Naive thymus-derived CD4-positive, alpha-beta T cell (primary cell): ENCODE measurements at regions of chr7 and their contacts with region 1.

Region 1: DNA sequence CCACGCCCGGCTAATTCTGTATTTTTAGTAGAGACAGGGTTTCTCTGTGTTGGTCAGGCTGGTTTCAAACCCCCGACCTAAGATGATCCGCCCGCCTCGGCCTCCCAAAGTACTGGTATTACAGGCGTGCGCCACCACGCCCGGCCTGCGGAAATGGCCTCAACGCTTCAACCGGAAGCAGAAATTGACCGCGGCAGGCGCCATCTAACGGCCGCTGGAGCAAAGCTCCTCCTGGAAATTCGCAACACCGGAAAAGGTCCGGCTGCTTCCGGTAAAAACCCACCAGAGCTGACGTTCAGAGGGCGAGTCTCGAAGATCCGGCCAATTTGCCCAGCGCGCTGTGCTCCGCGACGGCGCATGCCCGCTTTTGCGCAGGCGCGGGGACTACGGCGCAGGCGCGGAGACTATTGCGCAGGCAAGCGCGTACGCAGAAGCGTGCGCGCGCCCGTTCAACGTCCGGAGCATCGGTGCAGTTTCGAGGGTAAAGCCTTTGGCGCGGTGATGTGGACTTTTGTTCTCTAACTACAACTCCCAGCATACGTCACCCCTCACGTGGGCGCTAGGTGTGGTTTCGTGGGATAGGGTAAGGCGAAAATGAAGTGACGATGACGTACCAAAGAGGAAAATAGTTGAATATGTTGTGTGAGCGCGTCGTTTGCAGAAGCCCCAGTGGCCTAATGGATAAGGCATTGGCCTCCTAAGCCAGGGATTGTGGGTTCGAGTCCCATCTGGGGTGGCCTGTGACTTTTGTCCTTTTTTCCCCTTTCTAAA is 915 bp upstream of the FMC1 start:
- DNase-seq: peak; percentile 93 to 100 (median 99)
- ATAC-seq: peak; percentile 89
- H3K4me3 ChIP-seq: peak overlapping the region; percentile 95
- H3K4me3 Mint-ChIP-seq: peak overlapping the region; percentile 93 to 100 (median 98)
- H3K27ac ChIP-seq: peak overlapping the region; percentile 100
- H3K27ac Mint-ChIP-seq: peak overlapping the region; percentile 98 to 100 (median 100)
- H3K4me1 ChIP-seq: peaks cover 11 to 13% of the 10 kb centered on the region in 2 donors
- H3K4me1 Mint-ChIP-seq: peaks cover 12 to 49% (median 38%) of the 10 kb centered on the region in 7 donors
- H3K27me3 ChIP-seq: no peaks in the 10 kb centered on the region
- H3K27me3 Mint-ChIP-seq: peaks cover 0 to 9% (median 5%) of the 10 kb centered on the region in 5 donors

Region 2: GRCh38 chr7:138002096-138002827 is 1338.0 kb before region 1 on chr7:
- CTCF ChIA-PET with region 1: no interaction called
- POLR2A ChIA-PET with region 1: no interaction called
- intact Hi-C with region 1: loop called in 1 of 2 experiments (anchors 2 kb)
- DNase-seq: peak; percentile 95 to 98 (median 97)
- ATAC-seq: peak; percentile 95
- H3K4me3 ChIP-seq: peak overlapping the region; percentile 99
- H3K4me3 Mint-ChIP-seq: peak overlapping the region; percentile 89 to 96 (median 94)
- H3K27ac ChIP-seq: peak overlapping the region; percentile 79
- H3K27ac Mint-ChIP-seq: peak overlapping the region; percentile 67 to 95 (median 89)
- H3K4me1 ChIP-seq: peaks cover 6 to 14% of the 10 kb centered on the region in 2 donors
- H3K4me1 Mint-ChIP-seq: peaks cover 9 to 54% (median 45%) of the 10 kb centered on the region in 7 donors
- H3K27me3 ChIP-seq: no peaks in the 10 kb centered on the region
- H3K27me3 Mint-ChIP-seq: no peaks in the 10 kb centered on the region

Region 3: DNA sequence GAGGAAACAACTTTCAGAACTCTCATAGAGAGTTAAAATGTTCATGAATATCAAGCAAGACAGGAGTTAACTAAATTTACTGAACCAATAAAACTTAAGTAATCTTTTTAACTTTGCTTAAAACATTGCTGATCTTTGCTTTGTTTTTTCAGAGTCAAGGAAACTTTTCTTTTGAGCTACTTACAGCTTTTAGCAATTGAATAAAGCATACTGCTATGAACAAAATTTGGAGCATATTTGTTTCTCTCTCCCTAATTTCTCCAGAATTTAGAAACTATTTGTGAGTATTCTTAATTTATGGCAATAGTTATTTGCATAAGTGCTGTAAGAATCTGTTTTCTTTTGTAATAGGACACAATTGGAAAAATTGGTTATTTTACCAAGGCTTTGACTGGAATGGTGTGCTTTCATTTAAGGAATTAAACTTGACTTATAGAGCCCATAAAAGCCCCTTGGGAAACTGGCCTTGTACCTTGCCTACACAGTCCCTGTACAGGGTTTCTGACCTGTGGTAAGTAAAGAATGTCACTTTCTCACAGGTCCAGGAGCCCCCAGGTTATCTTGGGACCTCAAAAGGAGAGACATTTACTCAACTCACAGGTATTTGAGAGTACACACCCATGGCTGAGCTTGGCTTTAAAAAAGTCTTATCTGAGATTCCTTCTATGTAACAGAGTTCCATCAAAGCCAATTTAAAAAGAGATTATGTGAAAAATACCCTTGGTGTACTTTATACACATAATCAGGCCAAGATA is 335.7 kb before region 1 on chr7:
- CTCF ChIA-PET with region 1: no interaction called
- POLR2A ChIA-PET with region 1: no interaction called
- intact Hi-C with region 1: no loop called
- DNase-seq: peak in 2 of 9 donors; percentile 17 to 18
- ATAC-seq: no peak
- H3K4me3 ChIP-seq: no peak overlapping the region
- H3K4me3 Mint-ChIP-seq: no peak overlapping the region
- H3K27ac ChIP-seq: no peak overlapping the region
- H3K27ac Mint-ChIP-seq: no peak overlapping the region
- H3K4me1 ChIP-seq: peaks cover 0 to under 1% of the 10 kb centered on the region in 2 donors
- H3K4me1 Mint-ChIP-seq: peaks cover 0 to 8% (median 5%) of the 10 kb centered on the region in 7 donors
- H3K27me3 ChIP-seq: no peaks in the 10 kb centered on the region
- H3K27me3 Mint-ChIP-seq: peaks cover 0 to 21% (median 0%) of the 10 kb centered on the region in 5 donors

Region 4: GRCh38 chr7:139043823-139044812 is 296.1 kb before region 1 on chr7:
- CTCF ChIA-PET with region 1: no interaction called
- POLR2A ChIA-PET with region 1: no interaction called
- intact Hi-C with region 1: loop called in 1 of 2 experiments (anchors 5 kb)
- DNase-seq: peak in 5 of 9 donors; percentile 36 to 71 (median 40)
- ATAC-seq: peak; percentile 81
- H3K4me3 ChIP-seq: no peak overlapping the region
- H3K4me3 Mint-ChIP-seq: peak overlapping the region in 9 of 10 donors; percentile 4 to 87 (median 58)
- H3K27ac ChIP-seq: peak overlapping the region; percentile 50
- H3K27ac Mint-ChIP-seq: peak overlapping the region; percentile 48 to 89 (median 79)
- H3K4me1 ChIP-seq: peaks cover 36 to 38% of the 10 kb centered on the region in 2 donors
- H3K4me1 Mint-ChIP-seq: peaks cover 35 to 77% (median 67%) of the 10 kb centered on the region in 7 donors
- H3K27me3 ChIP-seq: no peaks in the 10 kb centered on the region
- H3K27me3 Mint-ChIP-seq: no peaks in the 10 kb centered on the region

Region 5: DNA sequence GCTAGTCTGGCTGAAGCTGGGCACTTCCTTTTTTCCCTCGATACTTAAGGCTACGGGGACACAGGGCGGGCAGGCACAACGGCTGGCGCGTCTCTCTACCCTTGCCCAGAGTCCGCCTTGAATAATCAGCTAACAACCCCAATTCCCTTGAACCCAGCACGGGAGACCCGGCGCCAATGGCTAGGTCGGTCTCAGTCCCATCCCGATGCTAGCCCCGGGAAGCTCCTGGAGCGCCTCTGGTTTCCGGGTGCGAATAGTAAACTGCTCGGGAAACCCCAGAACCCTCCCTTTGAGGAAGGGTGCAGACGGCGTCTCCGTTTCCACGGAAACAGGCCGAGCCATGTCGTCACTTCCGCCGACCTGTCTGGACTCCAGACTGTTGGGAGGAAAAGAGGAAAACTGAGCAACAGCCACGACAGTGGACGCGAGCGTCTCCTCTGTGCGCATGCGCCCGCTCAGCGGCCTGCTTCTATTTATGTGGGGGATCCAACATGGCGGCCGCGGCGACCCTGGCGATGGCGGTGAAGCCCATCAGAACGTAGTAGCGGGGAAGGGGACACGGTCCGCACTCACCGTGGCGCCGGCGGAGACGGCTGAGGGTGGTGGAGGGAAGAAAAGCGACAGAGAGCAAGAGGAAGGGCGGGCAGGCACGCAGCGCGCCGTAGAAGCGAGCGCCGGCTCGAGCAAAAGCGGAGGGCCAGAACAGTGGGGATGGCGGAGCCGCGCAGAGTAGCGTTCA is 109.3 kb before region 1 on chr7 and contains the start of gene UBN2:
- CTCF ChIA-PET with region 1: no interaction called
- POLR2A ChIA-PET with region 1: no interaction called
- intact Hi-C with region 1: loop called (anchors 1 kb)
- DNase-seq: peak; percentile 68 to 91 (median 76)
- ATAC-seq: peak; percentile 86
- H3K4me3 ChIP-seq: peak within 1 kb of the TSS; percentile 77
- H3K4me3 Mint-ChIP-seq: peak within 1 kb of the TSS; percentile 96 to 100 (median 99)
- H3K27ac ChIP-seq: peak within 1 kb of the TSS; percentile 85
- H3K27ac Mint-ChIP-seq: peak within 1 kb of the TSS; percentile 93 to 98 (median 96)
- H3K4me1 ChIP-seq: no peaks in the 10 kb centered on the region
- H3K4me1 Mint-ChIP-seq: peaks cover 24 to 33% (median 29%) of the 10 kb centered on the region in 7 donors
- H3K27me3 ChIP-seq: no peaks in the 10 kb centered on the region
- H3K27me3 Mint-ChIP-seq: peaks cover 0 to 36% (median 5%) of the 10 kb centered on the region in 5 donors
- total RNA-seq, gene UBN2: 16.2 to 31.2 (median 20.5) TPM

Region 6: DNA sequence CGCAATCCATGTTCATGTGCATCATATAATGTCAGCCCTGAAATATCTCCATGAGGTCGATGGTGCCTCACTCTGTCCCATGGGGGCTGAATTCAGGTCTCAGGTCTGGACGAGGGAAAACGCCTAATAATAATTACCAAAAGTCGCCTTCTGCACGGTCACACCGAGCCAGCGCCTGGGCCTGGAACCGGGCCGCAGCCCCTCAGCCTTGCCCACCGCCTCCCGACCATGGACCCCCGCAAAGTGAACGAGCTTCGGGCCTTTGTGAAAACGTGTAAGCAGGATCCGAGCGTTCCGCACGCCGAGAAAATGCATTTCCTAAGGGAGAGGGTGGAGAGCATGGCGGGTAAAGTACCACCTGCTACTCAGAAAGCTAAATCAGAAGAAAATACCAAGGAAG is 162.0 kb after region 1 on chr7:
- CTCF ChIA-PET with region 1: no interaction called
- POLR2A ChIA-PET with region 1: no interaction called
- intact Hi-C with region 1: loop called in 1 of 2 experiments (anchors 2 kb)
- DNase-seq: no peak
- ATAC-seq: no peak
- H3K4me3 ChIP-seq: no peak overlapping the region
- H3K4me3 Mint-ChIP-seq: no peak overlapping the region
- H3K27ac ChIP-seq: no peak overlapping the region
- H3K27ac Mint-ChIP-seq: no peak overlapping the region
- H3K4me1 ChIP-seq: no peaks in the 10 kb centered on the region
- H3K4me1 Mint-ChIP-seq: peaks cover 2 to 9% (median 5%) of the 10 kb centered on the region in 7 donors
- H3K27me3 ChIP-seq: no peaks in the 10 kb centered on the region
- H3K27me3 Mint-ChIP-seq: peaks cover 0 to 19% (median 5%) of the 10 kb centered on the region in 5 donors

Region 7: DNA sequence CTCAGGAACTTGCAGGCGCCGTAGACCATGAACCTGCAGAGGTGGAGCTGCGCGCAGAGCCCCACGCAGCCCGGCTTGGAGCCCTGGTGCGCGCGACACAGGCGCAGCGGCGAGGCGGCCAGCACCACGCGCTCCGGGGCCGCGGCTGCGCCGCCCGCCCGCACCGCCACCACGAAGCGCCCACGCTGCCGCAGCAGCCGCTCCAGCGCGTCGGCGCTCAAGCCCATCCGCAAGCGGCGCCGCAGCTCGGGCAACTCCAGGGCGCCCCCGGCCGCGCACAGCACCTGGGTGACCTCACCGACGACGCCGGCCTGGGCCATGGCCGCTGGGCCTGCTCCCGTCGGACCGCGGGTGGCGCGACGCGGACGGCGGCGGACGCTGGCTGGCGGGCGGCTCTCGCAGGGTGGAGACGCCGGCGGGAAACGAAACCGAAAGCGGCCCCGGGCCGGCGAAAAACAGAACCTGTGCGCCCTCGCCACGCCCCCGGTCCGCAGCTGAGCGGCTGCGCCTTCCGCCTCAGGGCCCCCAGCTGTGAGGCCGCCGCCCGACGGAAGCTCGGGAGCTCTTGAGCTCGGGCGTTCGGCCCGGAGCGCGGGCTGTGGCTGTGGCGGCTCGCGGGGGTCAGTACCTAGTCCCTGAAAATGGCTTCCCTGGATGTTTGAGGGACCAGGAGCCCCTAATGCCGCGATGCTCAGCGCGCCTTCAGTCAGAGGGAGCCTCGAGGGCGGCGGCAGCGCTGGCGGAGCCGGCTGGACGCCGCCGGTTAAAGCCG is 722.5 kb after region 1 on chr7 and contains the start of gene PARP12:
- CTCF ChIA-PET with region 1: no interaction called
- POLR2A ChIA-PET with region 1: no interaction called
- intact Hi-C with region 1: loop called (anchors 1 to 5 kb)
- DNase-seq: peak; percentile 77 to 86 (median 83)
- ATAC-seq: peak; percentile 91
- H3K4me3 ChIP-seq: peak within 1 kb of the TSS; percentile 79
- H3K4me3 Mint-ChIP-seq: peak within 1 kb of the TSS; percentile 79 to 94 (median 90)
- H3K27ac ChIP-seq: peak within 1 kb of the TSS; percentile 81
- H3K27ac Mint-ChIP-seq: peak within 1 kb of the TSS; percentile 83 to 95 (median 92)
- H3K4me1 ChIP-seq: peaks cover 32 to 38% of the 10 kb centered on the region in 2 donors
- H3K4me1 Mint-ChIP-seq: peaks cover 34 to 55% (median 48%) of the 10 kb centered on the region in 7 donors
- H3K27me3 ChIP-seq: no peaks in the 10 kb centered on the region
- H3K27me3 Mint-ChIP-seq: peaks cover 0 to 7% (median 0%) of the 10 kb centered on the region in 5 donors
- total RNA-seq, gene PARP12: 66.2 to 145 (median 94.5) TPM

Region 8: DNA sequence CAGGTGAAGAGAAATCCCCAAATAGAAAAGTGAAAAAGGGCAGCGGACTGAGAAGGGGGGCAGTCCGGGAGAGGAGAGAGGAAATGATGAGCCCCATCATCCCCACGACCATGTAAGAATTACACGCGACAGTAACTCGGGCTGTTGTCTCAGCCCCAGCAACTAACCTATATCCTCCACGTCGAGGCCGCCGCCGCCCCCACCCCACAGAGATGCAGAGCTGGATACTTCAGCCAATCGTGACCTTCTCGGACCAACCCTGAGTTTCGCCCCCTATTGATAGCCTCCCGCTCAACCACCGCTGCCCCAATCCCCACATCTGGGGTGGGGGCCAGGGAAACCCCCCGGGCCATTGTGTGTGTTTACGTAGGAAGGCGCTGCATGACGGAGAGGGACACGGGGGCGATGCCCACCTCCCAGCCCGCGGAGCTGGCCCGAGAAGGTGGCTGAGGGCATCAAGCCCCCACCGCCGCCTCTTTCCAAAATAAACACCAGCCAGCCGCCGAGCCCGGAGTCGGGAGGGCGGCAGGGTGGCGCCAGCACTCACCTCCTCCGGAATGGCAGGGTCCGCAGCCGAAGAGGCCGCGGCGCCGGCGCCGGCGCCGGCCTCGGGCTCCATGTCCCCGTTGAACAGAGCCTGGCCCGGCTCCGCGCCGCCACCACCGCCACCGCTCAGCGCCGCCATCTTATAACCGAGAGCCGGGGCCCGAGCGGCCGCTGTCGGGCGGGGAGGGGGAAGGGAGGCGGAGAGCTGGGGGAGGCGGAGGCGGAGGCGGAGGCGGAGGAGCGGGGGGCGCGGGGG is 1584.0 kb after region 1 on chr7:
- CTCF ChIA-PET with region 1: no interaction called
- POLR2A ChIA-PET with region 1: no interaction called
- intact Hi-C with region 1: loop called (anchors 2 kb)
- DNase-seq: peak; percentile 61 to 89 (median 70)
- ATAC-seq: peak; percentile 84
- H3K4me3 ChIP-seq: peak overlapping the region; percentile 85
- H3K4me3 Mint-ChIP-seq: peak overlapping the region in 1 of 10 donors; percentile 89
- H3K27ac ChIP-seq: peak overlapping the region; percentile 100
- H3K27ac Mint-ChIP-seq: peak overlapping the region in 3 of 9 donors; percentile 92 to 99 (median 94)
- H3K4me1 ChIP-seq: peaks cover 9 to 18% of the 10 kb centered on the region in 2 donors
- H3K4me1 Mint-ChIP-seq: peaks cover 10 to 44% (median 22%) of the 10 kb centered on the region in 7 donors
- H3K27me3 ChIP-seq: no peaks in the 10 kb centered on the region
- H3K27me3 Mint-ChIP-seq: peaks cover 0 to 5% (median 0%) of the 10 kb centered on the region in 5 donors